MCF 10A (cell line): ENCODE measurements at regions of chr12 and their contacts with region 1.

Region 1: DNA sequence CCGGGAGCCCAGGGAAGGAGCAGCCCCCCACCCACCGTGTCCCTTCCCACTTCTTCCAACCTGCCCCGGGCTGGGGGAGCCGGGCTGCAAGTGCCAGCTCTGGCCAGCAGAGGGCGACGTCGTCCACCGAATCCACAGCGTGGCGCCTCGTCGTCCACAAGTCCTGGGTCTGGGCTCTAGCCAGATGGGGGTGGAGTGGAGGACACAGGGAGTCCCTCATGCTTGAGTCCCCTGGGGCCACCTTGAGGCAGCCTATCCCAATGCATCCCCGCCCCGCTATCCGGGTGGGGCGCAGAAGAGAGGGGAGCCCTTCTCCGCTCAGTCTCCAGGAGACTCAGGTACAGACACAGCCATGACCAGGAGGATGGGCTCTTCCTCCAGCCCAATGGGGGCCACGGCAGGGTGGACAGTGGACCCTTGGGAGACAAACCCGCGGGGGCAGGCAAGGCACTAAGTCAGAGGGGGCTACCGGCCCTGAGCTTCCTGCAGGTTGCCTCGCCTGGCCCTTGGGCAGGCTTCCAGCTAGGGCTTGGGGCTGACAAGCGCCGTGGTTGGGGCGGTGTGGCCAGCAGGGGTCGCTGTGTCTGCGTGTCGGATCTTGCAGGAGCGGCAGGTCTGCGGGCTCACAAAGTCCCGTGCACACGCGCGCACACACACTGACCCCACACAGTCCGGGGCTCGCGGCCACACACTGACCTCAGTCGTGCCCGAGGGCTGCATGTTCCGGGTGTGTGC is 5.5 kb downstream of the AQP5 start:
- DNase-seq: peak; percentile 85
- H3K4me3 Mint-ChIP-seq: peak overlapping the region; percentile 68
- H3K27ac Mint-ChIP-seq: no peak overlapping the region
- H3K4me1 Mint-ChIP-seq: peaks cover 10% of the 10 kb centered on the region
- H3K27me3 Mint-ChIP-seq: no peaks in the 10 kb centered on the region
- CTCF ChIP-seq: peak; percentile 87

Region 2: DNA sequence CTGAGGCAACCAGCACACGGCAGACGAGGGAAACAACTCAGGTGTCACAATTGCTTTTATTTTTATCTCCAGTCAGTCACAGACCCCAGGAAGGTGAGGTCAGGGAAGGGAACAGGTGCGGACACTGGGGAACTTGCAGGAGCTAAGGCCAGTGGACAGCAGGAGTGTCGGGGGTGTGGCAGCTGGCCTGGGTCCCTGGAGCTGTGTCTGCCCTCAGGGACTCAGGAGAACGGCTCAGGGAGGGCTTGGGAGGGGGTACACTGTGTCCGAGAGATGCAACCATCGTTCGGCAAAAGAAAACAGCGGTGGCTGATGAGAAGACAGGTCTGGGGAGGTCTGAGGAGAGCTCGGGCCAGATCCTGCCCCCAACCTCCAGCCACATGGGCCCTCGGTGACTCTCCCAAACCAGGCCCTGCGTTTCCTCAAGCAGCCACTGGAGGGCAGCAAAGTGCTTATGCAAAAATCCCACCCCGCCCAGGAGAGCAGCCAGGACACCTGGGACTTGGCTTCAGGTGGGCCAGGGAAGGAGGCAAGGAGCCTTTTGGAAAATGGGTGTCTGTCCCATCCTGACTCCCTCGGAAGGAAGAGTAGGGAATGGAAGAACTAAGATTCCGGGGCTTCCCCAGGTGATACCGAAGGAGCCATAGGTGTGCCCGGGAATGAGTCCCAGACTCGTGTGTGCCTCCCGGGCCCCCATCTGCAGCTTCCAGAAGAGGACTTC is 100.2 kb before region 1 on chr12:
- CTCF ChIA-PET with region 1: interaction called, 59 read pairs
- POLR2A ChIA-PET with region 1: interaction called, 3 read pairs
- intact Hi-C with region 1: loop called (anchors 2 kb)
- DNase-seq: peak; percentile 77
- H3K4me3 Mint-ChIP-seq: no peak overlapping the region
- H3K27ac Mint-ChIP-seq: no peak overlapping the region
- H3K4me1 Mint-ChIP-seq: peaks cover 10% of the 10 kb centered on the region
- H3K27me3 Mint-ChIP-seq: peaks cover 14% of the 10 kb centered on the region
- CTCF ChIP-seq: peak; percentile 95

Region 3: GRCh38 chr12:49983892-49984291 is 16.7 kb after region 1 on chr12:
- CTCF ChIA-PET with region 1: interaction called, 92 read pairs
- POLR2A ChIA-PET with region 1: interaction called, 4 read pairs
- intact Hi-C with region 1: no loop called
- DNase-seq: peak; percentile 45
- H3K4me3 Mint-ChIP-seq: no peak overlapping the region
- H3K27ac Mint-ChIP-seq: no peak overlapping the region
- H3K4me1 Mint-ChIP-seq: peaks cover 5% of the 10 kb centered on the region
- H3K27me3 Mint-ChIP-seq: no peaks in the 10 kb centered on the region
- CTCF ChIP-seq: no peak

Region 4: DNA sequence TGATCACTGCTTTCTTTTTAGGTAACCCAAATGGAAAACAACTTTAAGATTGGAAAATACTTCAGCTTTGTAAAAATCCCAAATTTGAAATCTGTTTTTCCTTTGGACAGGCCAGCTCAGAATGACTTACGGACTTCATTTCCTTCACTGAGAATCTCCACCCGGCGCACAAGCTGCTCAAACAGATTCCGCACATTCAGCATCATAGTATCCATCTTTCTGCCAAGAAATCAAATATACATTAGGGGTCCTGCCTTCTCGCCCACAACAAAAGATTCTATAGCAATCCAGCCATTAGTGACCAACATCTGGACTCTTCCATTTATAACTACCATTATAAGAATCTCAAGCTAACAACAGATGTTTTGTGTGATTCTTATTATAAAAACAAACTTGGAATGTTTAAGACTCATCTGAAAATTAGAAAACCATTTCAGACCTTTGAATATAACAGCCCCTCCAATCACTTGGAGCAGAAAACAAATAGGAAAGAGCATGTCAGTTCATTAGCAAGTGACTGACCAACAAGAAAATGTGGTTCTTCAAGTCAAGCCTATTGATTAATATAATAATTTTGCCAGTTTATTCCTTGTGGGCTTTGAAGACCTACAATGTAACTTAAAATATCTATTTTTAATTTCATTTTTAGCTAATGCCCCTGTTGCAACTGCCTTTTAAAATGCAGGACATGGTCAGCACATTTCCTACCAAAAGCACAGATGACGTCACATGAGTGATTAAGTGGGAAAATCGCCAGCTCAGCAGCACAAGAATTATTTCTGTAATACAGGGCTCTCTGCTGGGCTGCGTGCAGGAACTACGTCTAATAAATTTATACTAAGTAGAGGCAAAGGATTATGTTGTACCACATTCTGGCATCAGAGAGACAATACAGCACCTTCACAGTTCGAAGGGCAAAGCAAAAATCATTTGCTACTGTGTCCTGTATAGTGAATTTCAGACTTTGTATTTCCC is 49.6 kb after region 1 on chr12:
- CTCF ChIA-PET with region 1: interaction called, 16 read pairs
- POLR2A ChIA-PET with region 1: no interaction called
- intact Hi-C with region 1: no loop called
- DNase-seq: peak; percentile 79
- H3K4me3 Mint-ChIP-seq: peak overlapping the region; percentile 43
- H3K27ac Mint-ChIP-seq: peak overlapping the region; percentile 73
- H3K4me1 Mint-ChIP-seq: peaks cover 50% of the 10 kb centered on the region
- H3K27me3 Mint-ChIP-seq: no peaks in the 10 kb centered on the region
- CTCF ChIP-seq: no peak

Region 5: GRCh38 chr12:50066433-50066832 is 99.2 kb after region 1 on chr12:
- CTCF ChIA-PET with region 1: interaction called, 241 read pairs
- POLR2A ChIA-PET with region 1: interaction called, 7 read pairs
- intact Hi-C with region 1: loop called (anchors 1 kb)
- DNase-seq: no peak
- H3K4me3 Mint-ChIP-seq: no peak overlapping the region
- H3K27ac Mint-ChIP-seq: no peak overlapping the region
- H3K4me1 Mint-ChIP-seq: peaks cover 14% of the 10 kb centered on the region
- H3K27me3 Mint-ChIP-seq: no peaks in the 10 kb centered on the region
- CTCF ChIP-seq: no peak

Region 6: GRCh38 chr12:50101663-50102062 is 134.5 kb after region 1 on chr12:
- CTCF ChIA-PET with region 1: no interaction called
- POLR2A ChIA-PET with region 1: no interaction called
- intact Hi-C with region 1: no loop called
- DNase-seq: peak; percentile 39
- H3K4me3 Mint-ChIP-seq: no peak overlapping the region
- H3K27ac Mint-ChIP-seq: no peak overlapping the region
- H3K4me1 Mint-ChIP-seq: peaks cover 18% of the 10 kb centered on the region
- H3K27me3 Mint-ChIP-seq: no peaks in the 10 kb centered on the region
- CTCF ChIP-seq: peak; percentile 35